ENCODE measurements at regions of chr11 and their contacts with region 1.

Region 1: DNA sequence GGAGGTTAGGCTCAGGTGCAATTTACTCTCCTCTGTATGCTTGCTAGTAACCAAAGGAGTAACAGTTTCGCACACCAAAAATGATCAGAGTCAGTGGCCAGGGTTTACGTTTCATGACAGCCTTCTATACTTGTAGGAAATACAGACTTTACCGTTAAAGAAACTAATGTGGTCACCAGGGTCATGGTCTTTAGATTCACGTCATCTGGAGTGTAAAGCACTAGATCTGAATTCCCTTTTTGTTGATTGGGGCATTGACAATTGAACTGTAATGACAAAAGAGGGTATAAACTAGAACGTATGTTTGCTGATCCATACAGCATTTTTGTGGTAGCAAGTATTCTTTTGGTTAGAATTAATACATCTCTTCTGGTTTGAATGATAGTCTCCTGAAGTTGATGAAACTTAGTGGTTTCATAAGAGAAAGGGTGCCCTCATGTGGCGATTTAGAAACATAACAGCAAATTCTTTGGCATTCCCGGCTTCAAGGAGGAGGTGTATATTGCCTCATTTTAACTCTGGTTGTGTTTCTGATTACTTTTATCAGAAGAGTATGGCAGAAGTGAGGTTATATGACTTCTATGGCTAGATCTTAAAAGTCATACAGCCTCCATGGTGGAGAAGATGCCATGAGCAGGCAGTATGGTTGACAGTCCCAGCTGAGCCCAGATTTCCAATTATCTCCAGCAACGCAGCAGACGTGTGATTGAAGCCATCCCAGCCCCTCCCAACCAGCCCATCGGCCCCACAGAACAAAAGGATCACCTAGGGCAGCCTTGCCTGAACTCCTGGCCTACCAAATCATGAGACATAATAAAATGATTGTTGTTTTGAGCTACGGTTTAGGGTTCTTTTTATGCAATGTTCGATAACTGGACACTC is 35.1 kb downstream of the MMP7 start:
- DNase-seq: peak in 1 of 10 donors; percentile 6
- H3K4me3 ChIP-seq: peak overlapping the region in 35 of 59 donors; percentile 1 to 53 (median 32)
- H3K27ac ChIP-seq: peak overlapping the region in 1 of 59 donors; percentile 3
- H3K27me3 ChIP-seq: peaks cover 0 to 11% (median 0%) of the 10 kb centered on the region in 45 donors
- CTCF ChIP-seq: peak; percentile 66 to 95 (median 84)

Region 2: DNA sequence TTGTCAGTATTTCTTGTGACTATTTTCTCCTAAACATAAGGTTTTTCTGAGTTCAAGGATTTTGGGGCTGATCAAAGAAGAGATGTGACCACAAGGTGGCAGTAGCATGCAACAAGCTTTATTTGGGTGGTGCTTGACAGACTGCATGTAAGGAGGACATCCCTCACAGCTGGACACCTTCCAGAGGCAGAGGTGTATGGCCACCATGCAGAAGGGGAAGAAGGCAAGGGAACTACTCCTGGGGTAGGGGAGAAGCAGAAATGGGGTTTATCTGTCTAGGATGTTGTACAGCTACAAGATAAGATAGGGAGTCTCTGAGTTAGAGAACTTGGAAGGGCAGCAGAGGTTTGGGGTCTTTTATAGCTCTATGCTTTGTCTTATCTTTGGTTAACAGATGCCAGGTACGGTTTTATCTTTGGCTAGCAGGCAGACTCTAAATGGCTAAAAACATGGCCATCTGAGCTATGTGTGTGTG is 153.5 kb before region 1 on chr11:
- intact Hi-C with region 1: loop called (anchors 5 kb)
- DNase-seq: peak in 6 of 10 donors; percentile 38 to 74 (median 60)
- H3K4me3 ChIP-seq: no peak overlapping the region
- H3K27ac ChIP-seq: no peak overlapping the region
- H3K27me3 ChIP-seq: no peaks in the 10 kb centered on the region
- CTCF ChIP-seq: peak; percentile 64 to 92 (median 84)

Region 3: GRCh38 chr11:102367364-102367763 is 128.0 kb before region 1 on chr11:
- intact Hi-C with region 1: loop called in 1 of 2 experiments (anchors 2 kb)
- DNase-seq: no peak
- H3K4me3 ChIP-seq: peak overlapping the region in 1 of 59 donors; percentile 2
- H3K27ac ChIP-seq: peak overlapping the region in 13 of 59 donors; percentile 2 to 58 (median 21)
- H3K27me3 ChIP-seq: no peaks in the 10 kb centered on the region
- CTCF ChIP-seq: peak in 53 of 56 donors; percentile 16 to 76 (median 50)

Region 4: GRCh38 chr11:102390667-102391465 is 104.5 kb before region 1 on chr11:
- intact Hi-C with region 1: loop called (anchors 2 to 5 kb)
- DNase-seq: peak; percentile 8 to 82 (median 68)
- H3K4me3 ChIP-seq: no peak overlapping the region
- H3K27ac ChIP-seq: peak overlapping the region in 39 of 59 donors; percentile 5 to 76 (median 40)
- H3K27me3 ChIP-seq: no peaks in the 10 kb centered on the region
- CTCF ChIP-seq: peak; percentile 69 to 96 (median 88)

Region 5: DNA sequence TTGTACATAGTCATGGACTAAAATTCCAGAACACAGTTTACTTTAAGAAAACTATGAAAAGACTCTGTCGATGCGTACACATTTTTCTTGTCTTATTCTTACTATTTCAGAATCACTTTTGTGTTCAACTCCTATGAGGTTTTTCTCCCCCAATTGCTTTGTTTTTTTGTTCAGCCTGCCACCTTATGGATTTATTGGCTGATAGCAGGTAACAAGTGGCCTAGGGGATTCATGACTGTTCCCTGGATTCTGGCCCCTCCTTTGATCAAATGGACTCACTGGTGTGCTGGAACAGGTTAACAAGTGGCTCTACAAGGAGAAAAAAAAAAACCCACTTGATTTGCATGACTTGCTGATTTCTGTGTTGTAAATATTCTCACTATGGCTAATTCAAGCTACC is 119.1 kb after region 1 on chr11:
- intact Hi-C with region 1: loop called in 1 of 2 experiments (anchors 5 kb)
- DNase-seq: no peak
- H3K4me3 ChIP-seq: no peak overlapping the region
- H3K27ac ChIP-seq: no peak overlapping the region
- H3K27me3 ChIP-seq: no peaks in the 10 kb centered on the region
- CTCF ChIP-seq: peak in 4 of 56 donors; percentile 13 to 28 (median 22)

Region 6: DNA sequence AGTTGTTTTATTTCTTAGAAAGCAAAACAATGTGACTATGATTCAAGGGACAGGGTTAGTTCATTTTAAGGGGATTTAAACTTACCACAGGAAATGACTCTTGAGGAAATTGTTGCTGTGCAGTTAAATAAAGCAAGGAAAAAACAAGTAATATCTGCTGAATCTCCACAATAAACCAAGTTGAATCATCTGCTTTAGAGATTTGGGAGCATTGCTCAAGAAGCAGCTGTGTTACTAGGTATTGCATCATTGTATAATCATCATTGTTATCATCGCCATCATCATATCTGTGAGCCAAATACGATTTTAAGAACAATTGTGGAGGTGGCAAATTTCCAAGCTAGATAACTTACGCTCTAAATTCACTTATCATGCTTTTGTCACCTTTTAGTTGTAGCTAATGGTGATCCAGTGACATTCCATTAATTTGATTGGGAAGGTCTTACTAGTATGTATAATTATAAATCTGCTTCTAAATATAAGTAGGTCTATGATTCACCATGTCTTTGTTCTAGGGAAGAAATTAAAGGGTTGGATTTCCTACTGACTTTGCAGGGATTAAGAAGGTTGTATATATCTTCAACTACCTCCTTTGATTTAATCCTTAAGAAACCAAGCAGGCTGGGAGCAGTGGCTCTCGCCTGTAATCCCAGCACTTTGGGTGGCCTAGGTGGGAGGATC is 265.1 kb after region 1 on chr11:
- intact Hi-C with region 1: no loop called
- DNase-seq: no peak
- H3K4me3 ChIP-seq: no peak overlapping the region
- H3K27ac ChIP-seq: no peak overlapping the region
- H3K27me3 ChIP-seq: peaks cover 0 to 19% (median 0%) of the 10 kb centered on the region in 45 donors
- CTCF ChIP-seq: no peak

Measured in dorsolateral prefrontal cortex (tissue), 120 donors.